ENCODE measurements at regions of chr9 and their contacts with region 1.

Region 1: DNA sequence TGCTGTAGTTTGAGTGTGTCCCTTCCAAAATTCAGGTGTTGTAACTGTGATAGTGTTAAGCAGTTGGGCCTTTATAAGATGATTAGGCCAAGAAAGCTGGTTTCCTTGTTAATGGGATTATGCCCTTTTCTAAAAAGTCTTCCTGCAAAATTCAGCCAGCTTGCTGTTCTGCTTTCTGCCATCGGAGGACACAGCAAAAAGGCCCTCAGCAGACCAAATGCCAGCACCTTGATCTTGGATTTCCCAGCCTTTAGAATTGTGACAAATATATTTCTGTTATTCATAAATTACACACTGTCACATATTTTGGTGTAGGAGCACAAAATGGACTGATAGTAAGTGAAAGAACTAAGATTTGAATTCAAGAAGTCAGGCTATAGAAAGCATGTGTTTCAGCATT is 203.2 kb downstream of the IZUMO3 start:
- DNase-seq: no peak
- ATAC-seq: no peak
- H3K4me3 ChIP-seq: no peak overlapping the region
- H3K4me3 Mint-ChIP-seq: no peak overlapping the region
- H3K27ac ChIP-seq: no peak overlapping the region
- H3K27ac Mint-ChIP-seq: no peak overlapping the region
- H3K4me1 ChIP-seq: no peaks in the 10 kb centered on the region
- H3K4me1 Mint-ChIP-seq: no peaks in the 10 kb centered on the region
- H3K27me3 ChIP-seq: no peaks in the 10 kb centered on the region
- H3K27me3 Mint-ChIP-seq: no peaks in the 10 kb centered on the region
- CTCF ChIP-seq: no peak

Region 2: GRCh38 chr9:24286763-24287162 is 55.7 kb before region 1 on chr9:
- CTCF ChIA-PET with region 1: no interaction called
- POLR2A ChIA-PET with region 1: no interaction called
- intact Hi-C with region 1: loop called in 1 of 2 experiments (anchors 10 kb)
- DNase-seq: no peak
- ATAC-seq: no peak
- H3K4me3 ChIP-seq: no peak overlapping the region
- H3K4me3 Mint-ChIP-seq: no peak overlapping the region
- H3K27ac ChIP-seq: no peak overlapping the region
- H3K27ac Mint-ChIP-seq: no peak overlapping the region
- H3K4me1 ChIP-seq: no peaks in the 10 kb centered on the region
- H3K4me1 Mint-ChIP-seq: no peaks in the 10 kb centered on the region
- H3K27me3 ChIP-seq: no peaks in the 10 kb centered on the region
- H3K27me3 Mint-ChIP-seq: no peaks in the 10 kb centered on the region
- CTCF ChIP-seq: no peak

Region 3: GRCh38 chr9:26243722-26244121 is 1901.3 kb after region 1 on chr9:
- CTCF ChIA-PET with region 1: no interaction called
- POLR2A ChIA-PET with region 1: no interaction called
- intact Hi-C with region 1: loop called in 1 of 2 experiments (anchors 10 kb)
- DNase-seq: no peak
- ATAC-seq: no peak
- H3K4me3 ChIP-seq: no peak overlapping the region
- H3K4me3 Mint-ChIP-seq: no peak overlapping the region
- H3K27ac ChIP-seq: no peak overlapping the region
- H3K27ac Mint-ChIP-seq: no peak overlapping the region
- H3K4me1 ChIP-seq: no peaks in the 10 kb centered on the region
- H3K4me1 Mint-ChIP-seq: no peaks in the 10 kb centered on the region
- H3K27me3 ChIP-seq: no peaks in the 10 kb centered on the region
- H3K27me3 Mint-ChIP-seq: no peaks in the 10 kb centered on the region
- CTCF ChIP-seq: no peak

Measured in CD8-positive, alpha-beta T cell (primary cell).